ENCODE measurements at regions of chr18 and their contacts with region 1.

Region 1: GRCh38 chr18:56489893-56490292 is 148.5 kb downstream of the TXNL1 start:
- DNase-seq: no peak
- ATAC-seq: no peak
- H3K4me3 Mint-ChIP-seq: no peak overlapping the region
- H3K27ac Mint-ChIP-seq: no peak overlapping the region
- H3K4me1 Mint-ChIP-seq: no peaks in the 10 kb centered on the region
- H3K27me3 Mint-ChIP-seq: peaks cover 7% of the 10 kb centered on the region

Region 2: DNA sequence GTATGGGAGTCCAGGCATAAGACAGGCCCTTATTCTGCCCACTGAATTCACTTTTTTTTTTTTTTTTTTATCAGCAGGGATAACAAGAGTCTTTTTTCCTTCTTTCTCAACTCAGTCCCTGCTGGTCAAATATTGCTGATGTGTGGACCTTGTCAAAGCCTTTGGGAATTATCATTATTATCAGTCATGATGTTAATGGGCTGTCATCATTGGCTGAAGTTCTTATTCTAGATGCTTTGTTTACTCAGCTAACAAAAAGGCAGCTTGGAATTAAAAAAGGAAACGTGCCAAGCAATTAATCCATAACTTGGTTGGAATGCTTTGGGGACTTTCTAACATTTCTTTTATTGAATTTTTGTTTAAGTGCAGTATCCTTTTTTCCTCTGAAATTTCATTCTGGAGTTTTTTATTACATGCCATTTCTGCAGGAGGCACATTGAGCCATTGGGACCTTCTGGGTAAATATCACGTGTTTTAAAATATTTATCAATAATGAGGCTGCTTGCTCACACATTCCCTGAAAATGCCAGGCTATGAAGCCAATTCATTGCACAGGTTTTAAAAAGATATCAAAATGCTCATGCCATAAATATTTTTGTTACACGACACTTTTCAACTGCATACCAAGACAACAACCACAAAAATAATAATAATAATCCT is 97.8 kb before region 1 on chr18:
- CTCF ChIA-PET with region 1: no interaction called
- POLR2A ChIA-PET with region 1: no interaction called
- intact Hi-C with region 1: no loop called
- DNase-seq: no peak
- ATAC-seq: no peak
- H3K4me3 Mint-ChIP-seq: no peak overlapping the region
- H3K27ac Mint-ChIP-seq: no peak overlapping the region
- H3K4me1 Mint-ChIP-seq: no peaks in the 10 kb centered on the region
- H3K27me3 Mint-ChIP-seq: no peaks in the 10 kb centered on the region

Region 3: DNA sequence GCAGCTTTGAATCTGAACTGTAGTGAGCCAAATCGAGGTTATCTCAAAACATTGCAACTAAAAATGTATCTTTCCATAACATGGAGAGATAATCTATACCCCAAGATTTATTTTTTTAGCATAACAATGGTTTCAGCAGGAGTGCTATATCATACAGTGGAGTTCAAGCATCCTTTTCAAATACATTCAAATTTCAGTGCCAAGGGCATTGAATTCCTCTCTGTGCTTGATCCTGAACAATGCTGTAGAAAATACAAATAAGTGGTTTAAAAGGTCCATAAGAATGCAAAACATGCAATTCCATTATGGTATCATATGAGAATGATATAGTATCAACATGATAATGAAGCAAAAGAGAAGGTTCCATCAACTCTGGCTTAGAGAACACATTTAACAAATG is 53.2 kb before region 1 on chr18:
- CTCF ChIA-PET with region 1: interaction called, 4 read pairs
- POLR2A ChIA-PET with region 1: no interaction called
- intact Hi-C with region 1: loop called in 1 of 2 experiments (anchors 5 kb)
- DNase-seq: no peak
- ATAC-seq: no peak
- H3K4me3 Mint-ChIP-seq: no peak overlapping the region
- H3K27ac Mint-ChIP-seq: no peak overlapping the region
- H3K4me1 Mint-ChIP-seq: no peaks in the 10 kb centered on the region
- H3K27me3 Mint-ChIP-seq: peaks cover 7% of the 10 kb centered on the region